ENCODE measurements at regions of chr2 and their contacts with region 1.

Region 1: GRCh38 chr2:72579591-72580180 is 246.1 kb downstream of the EXOC6B start:
- DNase-seq: peak; percentile 27
- H3K4me3 ChIP-seq: no peak overlapping the region
- H3K27ac ChIP-seq: no peak overlapping the region
- H3K4me1 ChIP-seq: peaks cover 0 to 31% of the 10 kb centered on the region in 2 experiments; a peak in 1 of 4 replicates
- H3K27me3 ChIP-seq: no peaks in the 10 kb centered on the region
- CTCF ChIP-seq: peak; percentile 83
- EP300 ChIP-seq: no peak
- RAD21 ChIP-seq: peak; percentile 88

Region 2: DNA sequence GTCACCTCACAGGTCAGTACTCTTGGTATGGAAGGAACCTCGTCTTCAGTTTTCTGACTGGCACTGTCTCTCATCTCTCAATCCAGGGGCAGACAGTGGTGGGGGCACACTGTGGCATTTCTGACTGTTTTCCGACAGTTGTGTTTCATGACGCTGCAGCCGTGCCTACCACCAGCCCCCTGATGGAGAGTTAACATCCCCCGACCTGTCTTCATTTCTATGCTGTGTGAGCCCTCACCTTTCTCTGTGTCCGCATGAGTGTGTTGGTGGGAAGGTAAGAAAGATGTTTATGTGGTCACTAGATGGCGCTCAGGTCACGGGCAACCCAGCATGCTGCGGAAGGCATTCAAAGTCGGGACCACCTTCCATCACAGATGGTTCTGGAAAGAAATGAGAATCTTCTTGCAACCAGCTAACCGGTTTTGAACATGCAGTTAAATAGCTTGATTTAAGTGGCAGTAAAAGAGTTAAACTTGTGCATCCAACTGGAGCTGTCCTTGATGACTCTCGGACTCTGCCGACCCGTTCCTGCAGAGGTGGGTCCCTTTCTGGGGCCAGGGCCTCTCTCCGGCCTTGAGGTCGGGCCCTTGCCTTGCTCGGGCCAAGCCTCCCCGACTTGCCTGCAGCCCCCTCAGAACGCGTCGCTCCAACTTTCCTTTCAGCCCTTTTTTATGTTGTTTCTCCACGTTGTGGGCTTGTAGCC is 1034.0 kb before region 1 on chr2:
- CTCF ChIA-PET with region 1: interaction called, 13 read pairs
- POLR2A ChIA-PET with region 1: no interaction called
- DNase-seq: peak; percentile 82
- H3K4me3 ChIP-seq: peak overlapping the region; percentile 12 to 19; a peak in 2 of 4 replicates
- H3K27ac ChIP-seq: no peak overlapping the region
- H3K4me1 ChIP-seq: no peaks in the 10 kb centered on the region; a peak in 1 of 4 replicates
- H3K27me3 ChIP-seq: no peaks in the 10 kb centered on the region; the same call in 1 of the 2 replicates
- CTCF ChIP-seq: peak; percentile 81
- EP300 ChIP-seq: no peak
- RAD21 ChIP-seq: peak; percentile 97

Region 3: GRCh38 chr2:72483346-72483745 is 96.3 kb before region 1 on chr2:
- CTCF ChIA-PET with region 1: no interaction called
- POLR2A ChIA-PET with region 1: no interaction called
- DNase-seq: no peak
- H3K4me3 ChIP-seq: no peak overlapping the region
- H3K27ac ChIP-seq: no peak overlapping the region
- H3K4me1 ChIP-seq: no peaks in the 10 kb centered on the region
- H3K27me3 ChIP-seq: no peaks in the 10 kb centered on the region
- CTCF ChIP-seq: no peak
- EP300 ChIP-seq: no peak
- RAD21 ChIP-seq: no peak

Region 4: GRCh38 chr2:72561621-72562318 is 17.9 kb before region 1 on chr2:
- CTCF ChIA-PET with region 1: interaction called, 14 read pairs
- POLR2A ChIA-PET with region 1: no interaction called
- DNase-seq: no peak
- H3K4me3 ChIP-seq: peak overlapping the region in 1 of 2 experiments; percentile 31; a peak in 2 of 4 replicates
- H3K27ac ChIP-seq: peak overlapping the region in 1 of 2 experiments; percentile 89; a peak in 2 of 4 replicates
- H3K4me1 ChIP-seq: peaks cover 6 to 17% of the 10 kb centered on the region in 2 experiments; a peak in 2 of 4 replicates
- H3K27me3 ChIP-seq: no peaks in the 10 kb centered on the region
- CTCF ChIP-seq: no peak
- EP300 ChIP-seq: 0 out of 4 replicates have a peak, but pooled peaks of 1 of the 2 experiments have one; percentile 19
- RAD21 ChIP-seq: no peak

Region 5: GRCh38 chr2:72745679-72746368 is 166.1 kb after region 1 on chr2:
- CTCF ChIA-PET with region 1: interaction called, 24 read pairs
- POLR2A ChIA-PET with region 1: no interaction called
- DNase-seq: peak; percentile 21
- H3K4me3 ChIP-seq: no peak overlapping the region
- H3K27ac ChIP-seq: no peak overlapping the region
- H3K4me1 ChIP-seq: peaks cover 0 to 12% of the 10 kb centered on the region in 2 experiments; a peak in 1 of 4 replicates
- H3K27me3 ChIP-seq: no peaks in the 10 kb centered on the region
- CTCF ChIP-seq: peak; percentile 85
- EP300 ChIP-seq: no peak
- RAD21 ChIP-seq: peak; percentile 86

Measured in SK-N-SH (cell line).